ENCODE measurements at regions of chr14 and their contacts with region 1.

Region 1: GRCh38 chr14:102917469-102918211 is 4.8 kb upstream of the AMN start:
- DNase-seq: peak in 6 of 7 donors; percentile 49 to 80 (median 60)
- H3K4me3 ChIP-seq: no peak overlapping the region
- H3K27ac ChIP-seq: no peak overlapping the region
- H3K4me1 ChIP-seq: peaks cover 0 to 2% of the 10 kb centered on the region in 2 donors
- H3K27me3 ChIP-seq: no peaks in the 10 kb centered on the region
- CTCF ChIP-seq: peak; percentile 39 to 70 (median 58)
- POLR2A ChIP-seq: no peak

Region 2: GRCh38 chr14:102694530-102695166 is 223.0 kb before region 1 on chr14:
- intact Hi-C with region 1: loop called (anchors 5 kb)
- DNase-seq: peak; percentile 48 to 85 (median 63)
- H3K4me3 ChIP-seq: no peak overlapping the region
- H3K27ac ChIP-seq: no peak overlapping the region
- H3K4me1 ChIP-seq: peaks cover 0 to 4% of the 10 kb centered on the region in 2 donors
- H3K27me3 ChIP-seq: no peaks in the 10 kb centered on the region
- CTCF ChIP-seq: peak; percentile 40 to 85 (median 72)
- POLR2A ChIP-seq: no peak

Region 3: GRCh38 chr14:102731871-102732800 is 185.5 kb before region 1 on chr14:
- intact Hi-C with region 1: no loop called
- DNase-seq: peak in 1 of 7 donors; percentile 35
- H3K4me3 ChIP-seq: no peak overlapping the region
- H3K27ac ChIP-seq: no peak overlapping the region
- H3K4me1 ChIP-seq: no peaks in the 10 kb centered on the region
- H3K27me3 ChIP-seq: no peaks in the 10 kb centered on the region
- CTCF ChIP-seq: no peak
- POLR2A ChIP-seq: no peak

Region 4: GRCh38 chr14:102774391-102775153 is 143.1 kb before region 1 on chr14:
- intact Hi-C with region 1: loop called (anchors 5 kb)
- DNase-seq: peak; percentile 53 to 84 (median 70)
- H3K4me3 ChIP-seq: no peak overlapping the region
- H3K27ac ChIP-seq: no peak overlapping the region
- H3K4me1 ChIP-seq: peaks cover 0 to 16% of the 10 kb centered on the region in 2 donors
- H3K27me3 ChIP-seq: no peaks in the 10 kb centered on the region
- CTCF ChIP-seq: peak; percentile 59 to 79 (median 72)
- POLR2A ChIP-seq: no peak

Measured in adrenal gland (tissue), 19 donors.